ENCODE measurements at regions of chr1 and their contacts with region 1.

Region 1: GRCh38 chr1:184805667-184806295 is 51.1 kb upstream of the EDEM3 start:
- DNase-seq: peak; percentile 15
- H3K4me3 ChIP-seq: no peak overlapping the region
- H3K27ac ChIP-seq: peak overlapping the region in 3 of 4 donors; percentile 41 to 56 (median 46)
- H3K4me1 ChIP-seq: peaks cover 0 to 51% (median 15%) of the 10 kb centered on the region in 3 donors
- H3K27me3 ChIP-seq: no peaks in the 10 kb centered on the region
- CTCF ChIP-seq: peak; percentile 88 to 96 (median 96)
- POLR2A ChIP-seq: no peak

Region 2: DNA sequence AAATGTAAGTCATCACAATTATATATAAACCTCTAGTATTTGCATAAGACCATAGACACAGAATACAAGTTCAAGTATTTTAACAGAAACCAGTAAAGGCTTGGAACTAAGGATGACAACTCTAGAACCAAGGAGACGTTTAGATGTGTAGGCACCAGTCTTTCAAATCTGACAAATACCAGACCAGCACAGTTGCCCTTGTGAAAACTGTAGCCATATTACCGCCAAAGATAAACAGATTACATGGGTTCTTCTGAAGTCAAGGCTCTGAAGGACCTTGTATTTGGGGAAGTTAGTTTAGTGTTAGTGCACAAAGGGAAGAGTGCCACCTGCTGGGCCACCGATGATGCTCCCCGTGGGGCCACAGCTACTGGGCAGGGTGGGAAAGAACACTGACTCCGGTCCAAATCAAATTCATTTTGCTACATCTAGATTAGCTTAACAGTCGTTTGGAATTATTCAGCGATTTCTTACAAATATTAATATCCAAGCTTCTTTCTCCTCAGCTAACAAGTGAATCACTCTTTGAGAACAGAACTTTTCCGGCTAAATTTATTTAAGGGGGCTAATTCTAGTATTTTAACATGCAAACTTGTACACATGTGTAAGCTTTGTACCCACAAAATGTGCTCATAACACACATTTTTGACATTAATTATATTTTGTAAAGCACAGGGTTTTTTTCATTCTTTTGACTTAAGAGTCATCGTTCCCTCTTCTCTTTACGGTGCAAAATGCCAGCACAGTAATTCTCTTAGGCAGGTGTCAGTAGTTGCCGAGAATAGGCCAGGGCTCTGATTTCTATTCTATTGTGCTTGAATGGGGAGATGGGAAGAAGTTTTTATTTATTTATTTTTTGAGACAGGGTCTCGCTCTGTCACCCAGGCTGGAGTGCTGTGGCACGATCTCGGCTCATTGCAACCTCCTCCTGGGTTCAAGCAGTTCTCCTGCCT is 176.5 kb after region 1 on chr1:
- intact Hi-C with region 1: loop called (anchors 5 kb)
- DNase-seq: peak; percentile 12
- H3K4me3 ChIP-seq: no peak overlapping the region
- H3K27ac ChIP-seq: no peak overlapping the region
- H3K4me1 ChIP-seq: peaks cover 0 to 8% (median 0%) of the 10 kb centered on the region in 3 donors
- H3K27me3 ChIP-seq: no peaks in the 10 kb centered on the region
- CTCF ChIP-seq: peak; percentile 78 to 94 (median 91)
- POLR2A ChIP-seq: no peak

Region 3: GRCh38 chr1:185663332-185663731 is 857.6 kb after region 1 on chr1:
- intact Hi-C with region 1: loop called (anchors 10 kb)
- DNase-seq: no peak
- H3K4me3 ChIP-seq: no peak overlapping the region
- H3K27ac ChIP-seq: no peak overlapping the region
- H3K4me1 ChIP-seq: no peaks in the 10 kb centered on the region
- H3K27me3 ChIP-seq: no peaks in the 10 kb centered on the region
- CTCF ChIP-seq: no peak
- POLR2A ChIP-seq: no peak

Measured in esophagus squamous epithelium (tissue), 5 donors.